ENCODE measurements at regions of chr10 and their contacts with region 1.

Region 1: GRCh38 chr10:63206997-63207811 is 74.1 kb downstream of the NRBF2 start:
- DNase-seq: no peak
- ATAC-seq: peak; percentile 62
- H3K4me3 Mint-ChIP-seq: no peak overlapping the region
- H3K27ac Mint-ChIP-seq: peak overlapping the region; percentile 75
- H3K4me1 Mint-ChIP-seq: peaks cover 70% of the 10 kb centered on the region
- H3K27me3 Mint-ChIP-seq: no peaks in the 10 kb centered on the region
- CTCF ChIP-seq: no peak

Region 2: GRCh38 chr10:62166331-62167131 is 1040.7 kb before region 1 on chr10:
- CTCF ChIA-PET with region 1: no interaction called
- POLR2A ChIA-PET with region 1: no interaction called
- intact Hi-C with region 1: no loop called
- DNase-seq: no peak
- ATAC-seq: peak; percentile 96
- H3K4me3 Mint-ChIP-seq: peak overlapping the region; percentile 16
- H3K27ac Mint-ChIP-seq: peak overlapping the region; percentile 80
- H3K4me1 Mint-ChIP-seq: peaks cover 38% of the 10 kb centered on the region
- H3K27me3 Mint-ChIP-seq: no peaks in the 10 kb centered on the region
- CTCF ChIP-seq: no peak

Region 3: GRCh38 chr10:62433181-62433692 is 774.0 kb before region 1 on chr10:
- CTCF ChIA-PET with region 1: no interaction called
- POLR2A ChIA-PET with region 1: no interaction called
- intact Hi-C with region 1: no loop called
- DNase-seq: no peak
- ATAC-seq: no peak
- H3K4me3 Mint-ChIP-seq: no peak overlapping the region
- H3K27ac Mint-ChIP-seq: no peak overlapping the region
- H3K4me1 Mint-ChIP-seq: peaks cover 2% of the 10 kb centered on the region
- H3K27me3 Mint-ChIP-seq: no peaks in the 10 kb centered on the region
- CTCF ChIP-seq: no peak

Region 4: GRCh38 chr10:63155388-63156020 is 51.7 kb before region 1 on chr10:
- CTCF ChIA-PET with region 1: no interaction called
- POLR2A ChIA-PET with region 1: no interaction called
- intact Hi-C with region 1: no loop called
- DNase-seq: no peak
- ATAC-seq: no peak
- H3K4me3 Mint-ChIP-seq: no peak overlapping the region
- H3K27ac Mint-ChIP-seq: no peak overlapping the region
- H3K4me1 Mint-ChIP-seq: peaks cover 12% of the 10 kb centered on the region
- H3K27me3 Mint-ChIP-seq: no peaks in the 10 kb centered on the region
- CTCF ChIP-seq: no peak

Region 5: DNA sequence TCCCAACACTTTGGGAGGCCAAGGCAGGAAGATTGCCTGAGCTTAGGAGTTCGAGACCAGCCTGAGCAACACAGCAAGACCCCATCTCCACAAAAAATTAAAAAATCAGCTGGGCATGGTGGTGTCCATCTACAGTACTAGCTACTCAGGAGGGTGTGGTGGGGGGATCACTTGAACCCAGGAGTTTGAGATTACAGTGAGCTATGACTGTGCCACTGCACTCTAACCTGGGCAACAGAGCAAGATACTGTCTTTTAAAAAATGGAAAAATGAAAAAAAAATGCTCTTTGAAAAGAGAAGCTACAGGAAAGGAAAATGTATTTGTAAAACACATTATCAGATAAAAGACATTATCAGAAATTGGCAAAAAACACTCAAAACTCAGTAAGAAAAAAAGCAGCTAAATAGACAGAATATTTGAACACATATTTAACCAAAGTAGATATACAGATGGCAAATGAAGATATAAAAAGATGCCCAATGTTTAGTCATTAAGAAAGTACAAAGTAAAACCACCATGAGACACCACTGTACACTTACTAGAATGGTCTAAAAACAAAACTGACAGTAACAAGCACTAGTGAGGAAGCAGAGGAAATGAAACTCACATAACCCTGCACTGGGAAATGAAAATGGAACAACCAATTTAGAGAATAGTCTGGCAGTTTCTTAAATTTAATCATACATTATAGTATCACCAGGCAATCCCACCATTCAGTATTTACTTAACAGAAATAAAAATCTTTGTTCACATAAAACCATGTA is 33.6 kb before region 1 on chr10:
- CTCF ChIA-PET with region 1: no interaction called
- POLR2A ChIA-PET with region 1: no interaction called
- intact Hi-C with region 1: loop called (anchors 5 kb)
- DNase-seq: no peak
- ATAC-seq: peak; percentile 99
- H3K4me3 Mint-ChIP-seq: peak overlapping the region; percentile 63
- H3K27ac Mint-ChIP-seq: peak overlapping the region; percentile 82
- H3K4me1 Mint-ChIP-seq: peaks cover 48% of the 10 kb centered on the region
- H3K27me3 Mint-ChIP-seq: no peaks in the 10 kb centered on the region
- CTCF ChIP-seq: no peak

Region 6: GRCh38 chr10:63192826-63193225 is 14.4 kb before region 1 on chr10:
- CTCF ChIA-PET with region 1: no interaction called
- POLR2A ChIA-PET with region 1: no interaction called
- intact Hi-C with region 1: loop called (anchors 2 kb)
- DNase-seq: no peak
- ATAC-seq: no peak
- H3K4me3 Mint-ChIP-seq: no peak overlapping the region
- H3K27ac Mint-ChIP-seq: no peak overlapping the region
- H3K4me1 Mint-ChIP-seq: peaks cover under 1% of the 10 kb centered on the region
- H3K27me3 Mint-ChIP-seq: no peaks in the 10 kb centered on the region
- CTCF ChIP-seq: no peak

Measured in activated B cell treated with CpG ODN at 0.5 μM for 24 hours (primary cell).